Uterus (tissue), 4 donors: ENCODE measurements at regions of chr20 and their contacts with region 1.

Region 1: GRCh38 chr20:47379433-47380150 is 23.1 kb upstream of the ZMYND8 start:
- DNase-seq: peak; percentile 72 to 85
- H3K4me3 ChIP-seq: no peak overlapping the region
- H3K27ac ChIP-seq: peak overlapping the region; percentile 55 to 66
- H3K4me1 ChIP-seq: no peaks in the 10 kb centered on the region
- H3K27me3 ChIP-seq: no peaks in the 10 kb centered on the region
- CTCF ChIP-seq: no peak
- POLR2A ChIP-seq: no peak

Region 2: DNA sequence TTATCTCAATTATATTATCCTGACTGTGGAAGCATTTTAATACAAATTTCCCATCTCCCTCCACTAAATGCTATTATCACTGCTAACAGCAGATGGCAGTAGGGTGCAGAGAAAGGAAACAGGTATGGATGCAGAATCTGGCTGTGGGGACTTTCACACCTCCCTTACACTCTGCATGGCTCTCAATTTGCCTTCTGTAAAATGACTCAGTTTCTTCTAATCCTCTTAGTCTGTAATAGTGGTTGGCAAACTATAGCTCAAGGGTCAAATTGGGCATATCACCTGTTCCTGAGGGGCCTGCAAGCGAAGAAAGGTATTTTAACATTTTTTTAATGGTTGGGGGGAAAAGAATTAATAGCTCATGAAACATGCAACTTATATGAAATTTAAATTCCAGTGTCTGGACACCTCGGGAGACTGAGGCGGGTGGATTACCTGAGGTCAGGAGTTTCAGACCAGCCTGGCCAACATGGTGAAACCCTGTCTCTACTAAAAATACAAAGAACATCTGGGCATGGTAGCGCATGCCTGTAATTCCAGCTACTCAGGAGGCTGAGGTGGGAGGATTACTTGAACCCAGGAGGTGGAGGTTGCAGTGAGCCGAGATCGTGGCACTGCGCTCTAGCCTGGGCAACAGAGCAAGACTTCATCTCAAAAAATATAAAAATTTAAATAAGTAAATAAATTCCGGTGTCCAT is 106.5 kb before region 1 on chr20:
- intact Hi-C with region 1: loop called (anchors 5 kb)
- DNase-seq: peak in 1 of 2 donors; percentile 74
- H3K4me3 ChIP-seq: no peak overlapping the region
- H3K27ac ChIP-seq: peak overlapping the region; percentile 72 to 77
- H3K4me1 ChIP-seq: peaks cover 10 to 15% of the 10 kb centered on the region in 2 donors
- H3K27me3 ChIP-seq: no peaks in the 10 kb centered on the region
- CTCF ChIP-seq: peak; percentile 85 to 98 (median 96)
- POLR2A ChIP-seq: no peak